Panc1 (cell line): ENCODE measurements at regions of chr10 and their contacts with region 1.

Region 1: GRCh38 chr10:122051251-122051996 is 62.5 kb downstream of the TACC2 start:
- DNase-seq: no peak
- ATAC-seq: peak; percentile 67
- H3K4me3 ChIP-seq: no peak overlapping the region
- H3K27ac ChIP-seq: peak overlapping the region; percentile 80; the same call in 1 of the 2 replicates
- H3K4me1 ChIP-seq: peaks cover 14% of the 10 kb centered on the region
- H3K27me3 ChIP-seq: no peaks in the 10 kb centered on the region
- CTCF ChIP-seq: peak; percentile 89

Region 2: DNA sequence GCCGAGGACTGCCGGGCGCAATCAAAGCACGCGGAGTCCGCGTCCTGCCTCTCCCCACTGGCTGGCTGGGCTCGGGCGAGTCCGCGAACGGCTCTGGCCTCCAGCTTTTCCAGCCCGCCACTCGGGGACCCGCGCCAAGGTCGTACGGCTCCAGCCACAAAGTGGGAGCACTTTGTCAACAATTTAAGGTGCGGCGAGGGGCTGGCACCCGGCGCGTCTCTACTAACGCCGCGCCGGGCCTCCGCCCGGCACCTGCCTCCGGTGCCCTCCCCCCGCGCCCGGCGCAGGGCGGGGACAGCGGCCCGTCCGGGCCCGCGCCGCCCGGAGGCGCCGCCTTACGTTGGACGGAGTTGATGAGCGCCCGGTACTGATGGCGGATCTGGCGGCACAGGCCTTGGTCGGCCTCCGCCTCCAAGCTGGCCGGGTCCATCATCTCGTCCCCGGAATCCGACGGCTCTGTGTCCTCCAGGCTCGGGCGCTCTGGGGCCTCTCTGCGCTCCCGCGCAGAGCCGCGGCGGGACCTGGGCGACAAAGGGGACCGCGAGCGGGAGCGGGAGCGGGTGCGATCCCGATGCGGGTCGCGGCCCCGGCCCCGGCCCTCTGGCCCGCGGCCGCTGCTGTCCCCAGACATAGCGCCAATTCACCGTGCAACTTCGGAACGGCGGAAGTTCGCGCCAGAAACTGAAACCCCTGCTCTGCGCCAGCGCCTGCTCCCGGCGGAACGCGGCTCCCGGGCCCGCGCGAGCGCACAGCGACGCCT is 76.7 kb before region 1 on chr10 and contains the start of gene NSMCE4A:
- CTCF ChIA-PET with region 1: interaction called, 10 read pairs
- POLR2A ChIA-PET with region 1: no interaction called
- in situ Hi-C with region 1: no loop called
- intact Hi-C with region 1: no loop called
- DNase-seq: no peak
- ATAC-seq: peak; percentile 97
- H3K4me3 ChIP-seq: peak within 1 kb of the TSS; percentile 70 to 83
- H3K27ac ChIP-seq: peak within 1 kb of the TSS; percentile 85
- H3K4me1 ChIP-seq: peaks cover 8% of the 10 kb centered on the region
- H3K27me3 ChIP-seq: no peaks in the 10 kb centered on the region
- CTCF ChIP-seq: peak; percentile 98
- total RNA-seq, gene NSMCE4A: 72.2 TPM

Region 3: GRCh38 chr10:122034149-122034756 is 17.2 kb before region 1 on chr10:
- CTCF ChIA-PET with region 1: no interaction called
- POLR2A ChIA-PET with region 1: interaction called, 11 read pairs
- in situ Hi-C with region 1: no loop called
- intact Hi-C with region 1: no loop called
- DNase-seq: no peak
- ATAC-seq: peak; percentile 44; the same call in 1 of the 2 replicates
- H3K4me3 ChIP-seq: no peak overlapping the region
- H3K27ac ChIP-seq: no peak overlapping the region
- H3K4me1 ChIP-seq: peaks cover 21% of the 10 kb centered on the region
- H3K27me3 ChIP-seq: no peaks in the 10 kb centered on the region
- CTCF ChIP-seq: no peak

Region 4: GRCh38 chr10:122062831-122063674 is 11.6 kb after region 1 on chr10:
- CTCF ChIA-PET with region 1: interaction called, 12 read pairs
- POLR2A ChIA-PET with region 1: no interaction called
- in situ Hi-C with region 1: no loop called
- intact Hi-C with region 1: no loop called
- DNase-seq: peak; percentile 97
- ATAC-seq: peak; percentile 99
- H3K4me3 ChIP-seq: no peak overlapping the region
- H3K27ac ChIP-seq: peak overlapping the region; percentile 92
- H3K4me1 ChIP-seq: peaks cover 39% of the 10 kb centered on the region
- H3K27me3 ChIP-seq: no peaks in the 10 kb centered on the region
- CTCF ChIP-seq: no peak

Region 5: DNA sequence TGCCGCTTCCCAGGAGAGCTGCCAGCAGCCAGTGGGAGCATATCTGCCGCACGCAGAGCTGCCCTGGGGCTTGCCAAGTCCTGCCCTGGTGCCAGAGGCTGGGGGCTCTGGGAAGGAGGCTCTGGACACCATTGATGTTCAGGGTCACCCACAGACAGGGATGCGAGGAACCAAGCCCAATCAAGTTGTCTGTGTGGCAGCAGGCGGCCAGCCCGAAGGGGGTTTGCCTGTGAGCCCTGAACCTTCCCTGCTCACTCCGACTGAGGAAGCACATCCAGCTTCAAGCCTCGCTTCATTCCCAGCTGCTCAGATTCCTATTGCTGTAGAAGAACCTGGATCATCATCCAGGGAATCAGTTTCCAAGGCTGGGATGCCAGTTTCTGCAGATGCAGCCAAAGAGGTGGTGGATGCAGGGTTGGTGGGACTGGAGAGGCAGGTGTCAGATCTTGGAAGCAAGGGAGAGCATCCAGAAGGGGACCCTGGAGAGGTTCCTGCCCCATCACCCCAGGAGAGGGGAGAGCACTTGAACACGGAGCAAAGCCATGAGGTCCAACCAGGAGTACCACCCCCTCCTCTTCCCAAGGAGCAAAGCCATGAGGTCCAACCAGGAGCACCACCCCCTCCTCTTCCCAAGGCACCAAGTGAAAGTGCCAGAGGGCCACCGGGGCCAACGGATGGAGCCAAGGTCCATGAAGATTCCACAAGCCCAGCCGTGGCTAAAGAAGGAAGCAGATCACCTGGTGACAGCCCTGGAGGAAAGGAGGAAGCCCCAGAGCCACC is 32.2 kb after region 1 on chr10:
- CTCF ChIA-PET with region 1: interaction called, 12 read pairs
- POLR2A ChIA-PET with region 1: no interaction called
- in situ Hi-C with region 1: no loop called
- intact Hi-C with region 1: no loop called
- DNase-seq: no peak
- ATAC-seq: no peak
- H3K4me3 ChIP-seq: no peak overlapping the region
- H3K27ac ChIP-seq: no peak overlapping the region; the same call in 1 of the 2 replicates
- H3K4me1 ChIP-seq: peaks cover 6% of the 10 kb centered on the region; the same call in 1 of the 2 replicates
- H3K27me3 ChIP-seq: no peaks in the 10 kb centered on the region
- CTCF ChIP-seq: no peak

Region 6: GRCh38 chr10:122098924-122099323 is 47.5 kb after region 1 on chr10:
- CTCF ChIA-PET with region 1: interaction called, 13 read pairs
- POLR2A ChIA-PET with region 1: no interaction called
- in situ Hi-C with region 1: no loop called
- intact Hi-C with region 1: loop called (anchors 1 kb)
- DNase-seq: no peak
- ATAC-seq: no peak
- H3K4me3 ChIP-seq: no peak overlapping the region
- H3K27ac ChIP-seq: peak overlapping the region; percentile 99
- H3K4me1 ChIP-seq: peaks cover 56% of the 10 kb centered on the region
- H3K27me3 ChIP-seq: no peaks in the 10 kb centered on the region
- CTCF ChIP-seq: no peak

Region 7: GRCh38 chr10:122112625-122113160 is 61.3 kb after region 1 on chr10:
- CTCF ChIA-PET with region 1: interaction called, 6 read pairs
- POLR2A ChIA-PET with region 1: interaction called, 3 read pairs
- in situ Hi-C with region 1: no loop called
- intact Hi-C with region 1: loop called (anchors 5 kb)
- DNase-seq: peak; percentile 70
- ATAC-seq: peak; percentile 89
- H3K4me3 ChIP-seq: peak overlapping the region; percentile 67 to 97
- H3K27ac ChIP-seq: peak overlapping the region; percentile 93
- H3K4me1 ChIP-seq: peaks cover 33% of the 10 kb centered on the region
- H3K27me3 ChIP-seq: no peaks in the 10 kb centered on the region
- CTCF ChIP-seq: peak; percentile 88